A549 (cell line): ENCODE measurements at regions of chr16 and their contacts with region 1.

Region 1: DNA sequence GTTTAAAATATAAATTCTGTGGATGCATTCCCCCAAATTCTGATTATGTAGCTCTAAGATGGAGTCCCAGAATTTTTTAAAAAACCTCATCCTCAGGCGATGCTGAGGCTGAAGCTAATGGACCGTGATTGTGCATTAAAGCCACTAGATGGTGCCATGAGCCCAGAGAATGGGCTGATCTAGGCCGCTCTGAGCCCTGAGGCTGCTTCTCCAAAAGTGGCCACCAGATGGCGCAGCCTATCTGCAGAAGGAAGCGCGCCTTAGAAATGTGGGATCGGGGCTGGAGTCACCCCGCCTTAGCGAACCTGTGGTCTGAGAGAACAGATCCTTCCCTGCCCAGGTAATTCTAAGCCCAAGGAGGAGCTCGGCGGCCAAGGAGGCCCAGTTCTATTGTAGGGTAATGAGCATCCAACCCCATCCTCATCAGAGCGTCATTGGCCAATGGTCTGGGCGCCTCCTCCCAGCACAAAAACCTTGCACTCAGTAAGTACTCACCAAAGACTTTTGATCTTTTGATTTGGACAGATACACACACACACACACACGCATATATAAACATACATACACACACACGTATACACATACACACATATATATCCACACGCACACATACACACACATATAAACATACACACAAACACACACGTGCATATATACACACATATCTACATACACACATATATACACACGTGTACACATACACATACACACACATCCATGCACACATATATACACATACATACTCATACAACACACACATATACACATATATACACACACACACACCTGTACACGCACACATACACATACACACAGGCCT is 13.7 kb upstream of the MMP2 start:
- DNase-seq: peak; percentile 74 to 82
- ATAC-seq: peak; percentile 86 to 96
- H3K4me3 ChIP-seq: no peak overlapping the region
- H3K27ac ChIP-seq: no peak overlapping the region
- H3K4me1 ChIP-seq: peaks cover under 1% of the 10 kb centered on the region; the same call in 1 of the 3 replicates
- CTCF ChIP-seq: peak; percentile 100
- EP300 ChIP-seq: no peak
- POLR2A ChIP-seq: no peak
- RAD21 ChIP-seq: peak; percentile 100

Region 2: DNA sequence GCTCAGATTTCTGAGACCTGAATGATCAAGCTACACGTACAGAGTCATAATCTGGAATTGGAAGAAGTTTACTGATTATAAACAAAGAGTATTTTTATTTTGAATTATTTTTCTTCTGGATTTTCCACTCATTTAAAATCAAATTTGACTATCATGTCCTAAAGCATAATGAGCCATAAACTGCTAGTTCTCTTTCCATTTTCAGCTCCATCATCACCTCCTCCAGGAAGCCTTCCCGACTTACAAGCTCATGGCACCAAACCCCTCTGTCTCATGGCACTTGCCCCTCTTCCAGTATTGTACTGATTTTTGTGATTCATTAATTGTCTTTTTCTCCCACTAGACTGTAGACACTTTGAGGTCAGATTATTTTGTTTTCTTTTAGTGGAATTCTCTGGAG is 105.3 kb before region 1 on chr16:
- CTCF ChIA-PET with region 1: no interaction called
- POLR2A ChIA-PET with region 1: no interaction called
- DNase-seq: no peak
- ATAC-seq: no peak
- H3K4me3 ChIP-seq: no peak overlapping the region
- H3K27ac ChIP-seq: no peak overlapping the region
- H3K4me1 ChIP-seq: no peaks in the 10 kb centered on the region
- CTCF ChIP-seq: no peak
- EP300 ChIP-seq: no peak
- POLR2A ChIP-seq: no peak
- RAD21 ChIP-seq: no peak

Region 3: DNA sequence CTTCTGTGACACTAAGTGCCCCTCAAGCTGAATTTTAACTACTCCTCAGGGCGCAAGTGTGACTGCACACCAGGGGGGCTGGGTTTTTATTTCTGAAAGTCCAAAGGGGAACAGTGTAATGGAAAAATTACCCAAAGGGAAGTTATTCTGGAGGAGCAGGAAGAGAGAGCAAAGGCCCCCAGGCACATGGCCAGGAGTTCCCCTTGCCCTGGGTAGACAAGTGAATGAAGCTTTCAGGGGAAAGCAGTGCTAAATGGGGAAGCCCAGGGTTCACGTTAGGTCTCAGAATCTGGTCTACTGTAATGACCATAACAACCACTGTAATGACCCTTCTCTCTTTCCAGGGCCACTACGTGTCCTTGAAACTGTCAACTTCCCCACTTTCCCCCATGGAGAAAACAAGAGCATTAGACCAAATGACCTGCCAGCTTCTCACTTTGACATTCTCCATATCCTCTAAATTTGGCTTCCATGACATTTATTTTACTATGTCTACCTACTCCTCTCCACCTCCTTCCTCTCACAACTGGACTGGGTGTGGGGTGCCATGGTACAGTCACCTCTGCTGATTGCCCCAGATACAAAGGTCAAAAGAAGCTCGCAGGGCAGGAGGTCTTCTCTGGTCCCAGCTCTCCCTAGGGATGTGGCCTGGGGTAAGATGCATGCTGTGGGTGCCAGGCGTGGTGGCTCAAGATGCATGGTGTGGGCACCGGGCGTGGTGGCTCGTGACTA is 20.4 kb before region 1 on chr16:
- CTCF ChIA-PET with region 1: interaction called, 27 read pairs
- POLR2A ChIA-PET with region 1: no interaction called
- DNase-seq: no peak
- ATAC-seq: no peak
- H3K4me3 ChIP-seq: no peak overlapping the region
- H3K27ac ChIP-seq: no peak overlapping the region
- H3K4me1 ChIP-seq: no peaks in the 10 kb centered on the region
- CTCF ChIP-seq: no peak
- EP300 ChIP-seq: no peak
- POLR2A ChIP-seq: no peak
- RAD21 ChIP-seq: no peak

Region 4: GRCh38 chr16:55487048-55487803 is 21.9 kb after region 1 on chr16:
- CTCF ChIA-PET with region 1: interaction called, 25 read pairs
- POLR2A ChIA-PET with region 1: no interaction called
- DNase-seq: no peak
- ATAC-seq: no peak
- H3K4me3 ChIP-seq: no peak overlapping the region
- H3K27ac ChIP-seq: no peak overlapping the region
- H3K4me1 ChIP-seq: no peaks in the 10 kb centered on the region
- CTCF ChIP-seq: no peak
- EP300 ChIP-seq: no peak
- POLR2A ChIP-seq: no peak
- RAD21 ChIP-seq: no peak

Region 5: DNA sequence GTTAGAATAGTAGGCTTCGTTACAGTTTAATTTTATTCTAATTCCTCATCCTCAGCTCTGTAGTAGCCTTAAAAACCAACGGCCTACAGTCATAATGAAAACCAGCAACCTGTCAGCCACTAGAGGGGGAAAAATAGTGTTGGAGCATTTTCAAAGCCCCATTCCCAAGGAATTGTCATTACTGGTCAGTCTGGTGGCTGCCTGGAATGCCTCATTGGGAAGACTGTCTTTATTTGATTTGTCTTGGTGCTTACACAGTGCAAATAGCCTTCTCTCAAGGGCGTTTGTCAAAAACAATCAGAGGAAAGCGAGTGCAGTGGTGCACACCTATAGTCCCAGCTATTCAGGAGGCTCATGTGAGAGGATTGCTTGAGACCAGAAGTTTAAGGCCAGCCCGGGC is 48.3 kb after region 1 on chr16:
- CTCF ChIA-PET with region 1: interaction called, 32 read pairs
- POLR2A ChIA-PET with region 1: no interaction called
- DNase-seq: no peak
- ATAC-seq: no peak
- H3K4me3 ChIP-seq: no peak overlapping the region
- H3K27ac ChIP-seq: no peak overlapping the region
- H3K4me1 ChIP-seq: no peaks in the 10 kb centered on the region
- CTCF ChIP-seq: no peak
- EP300 ChIP-seq: no peak
- POLR2A ChIP-seq: no peak
- RAD21 ChIP-seq: no peak

Region 6: GRCh38 chr16:55552621-55553020 is 87.3 kb after region 1 on chr16:
- CTCF ChIA-PET with region 1: interaction called, 147 read pairs
- POLR2A ChIA-PET with region 1: no interaction called
- DNase-seq: peak in 1 of 2 experiments; percentile 7
- ATAC-seq: no peak
- H3K4me3 ChIP-seq: no peak overlapping the region
- H3K27ac ChIP-seq: no peak overlapping the region
- H3K4me1 ChIP-seq: no peaks in the 10 kb centered on the region
- CTCF ChIP-seq: no peak
- EP300 ChIP-seq: no peak
- POLR2A ChIP-seq: no peak
- RAD21 ChIP-seq: no peak

Region 7: DNA sequence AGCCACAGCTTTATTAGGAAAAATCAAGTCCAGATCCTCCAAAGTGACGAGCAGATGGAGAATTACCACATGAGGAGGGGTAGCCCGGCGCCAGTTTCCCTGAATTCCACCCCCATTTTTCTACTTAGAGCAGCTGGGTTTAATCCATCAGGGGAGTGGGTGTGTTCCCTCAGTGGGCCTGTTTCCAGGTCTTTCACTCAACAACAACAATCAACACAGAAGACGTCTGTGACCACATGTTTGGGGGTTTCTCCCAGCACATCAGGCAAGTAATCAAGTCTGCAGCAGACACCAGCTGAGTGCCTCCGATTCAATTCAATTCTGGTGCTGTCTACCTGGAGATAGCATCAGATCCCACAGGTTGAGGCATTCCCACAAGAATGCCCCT is 197.4 kb after region 1 on chr16:
- CTCF ChIA-PET with region 1: interaction called, 17 read pairs
- POLR2A ChIA-PET with region 1: no interaction called
- DNase-seq: no peak
- ATAC-seq: no peak
- H3K4me3 ChIP-seq: no peak overlapping the region
- H3K27ac ChIP-seq: no peak overlapping the region
- H3K4me1 ChIP-seq: no peaks in the 10 kb centered on the region
- CTCF ChIP-seq: no peak
- EP300 ChIP-seq: no peak
- POLR2A ChIP-seq: no peak
- RAD21 ChIP-seq: no peak

Region 8: DNA sequence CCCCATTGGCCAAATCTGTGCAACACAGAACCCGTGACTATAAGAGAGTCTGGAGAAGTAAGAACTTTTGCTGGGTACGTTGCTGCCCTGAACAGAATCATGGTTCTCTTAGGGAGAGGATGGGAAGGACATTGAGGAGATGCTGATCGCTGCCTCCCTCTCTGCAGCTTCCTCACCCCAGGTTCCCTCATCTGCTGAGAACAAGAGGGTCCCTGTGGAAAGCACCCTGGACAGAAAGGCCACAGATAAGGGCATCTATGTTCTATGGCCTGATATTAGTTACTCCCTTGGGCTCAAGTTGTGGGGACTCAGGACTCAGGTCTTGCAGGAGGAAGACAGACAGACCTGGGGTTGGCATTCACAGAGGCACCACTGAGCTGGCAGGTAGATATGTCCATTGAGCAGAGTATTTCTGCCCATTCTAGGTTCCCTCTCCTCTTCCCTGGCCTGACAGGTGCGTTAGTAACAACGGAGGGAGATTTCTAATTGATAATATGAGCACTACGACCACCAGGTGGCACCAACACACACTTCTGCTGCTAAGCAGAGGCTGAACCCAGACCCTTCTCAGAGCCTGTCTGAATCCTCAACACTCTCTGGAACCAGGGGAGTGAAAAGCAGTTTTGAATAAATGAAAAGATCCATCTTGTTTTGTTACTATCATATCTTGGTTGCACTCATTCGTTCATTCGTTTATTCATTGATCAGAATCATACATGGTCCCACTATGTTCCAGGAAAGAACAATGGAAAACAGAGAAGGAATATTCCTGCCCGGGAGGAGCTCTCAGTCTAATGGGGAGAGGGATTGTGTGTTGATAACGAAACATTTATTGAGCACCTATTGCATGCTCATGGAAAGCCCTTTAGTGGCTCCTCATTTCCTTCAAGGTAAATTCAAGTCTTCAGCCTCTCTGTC is 246.9 kb after region 1 on chr16:
- CTCF ChIA-PET with region 1: interaction called, 554 read pairs
- POLR2A ChIA-PET with region 1: no interaction called
- DNase-seq: peak; percentile 58 to 70
- ATAC-seq: peak; percentile 84 to 99; a peak in 4 of 6 replicates
- H3K4me3 ChIP-seq: no peak overlapping the region
- H3K27ac ChIP-seq: no peak overlapping the region
- H3K4me1 ChIP-seq: no peaks in the 10 kb centered on the region
- CTCF ChIP-seq: peak; percentile 79
- EP300 ChIP-seq: no peak
- POLR2A ChIP-seq: no peak
- RAD21 ChIP-seq: peak; percentile 75 to 81